Right ventricle myocardium superior (tissue), 1 donor: ENCODE measurements at regions of chr2 and their contacts with region 1.

Region 1: DNA sequence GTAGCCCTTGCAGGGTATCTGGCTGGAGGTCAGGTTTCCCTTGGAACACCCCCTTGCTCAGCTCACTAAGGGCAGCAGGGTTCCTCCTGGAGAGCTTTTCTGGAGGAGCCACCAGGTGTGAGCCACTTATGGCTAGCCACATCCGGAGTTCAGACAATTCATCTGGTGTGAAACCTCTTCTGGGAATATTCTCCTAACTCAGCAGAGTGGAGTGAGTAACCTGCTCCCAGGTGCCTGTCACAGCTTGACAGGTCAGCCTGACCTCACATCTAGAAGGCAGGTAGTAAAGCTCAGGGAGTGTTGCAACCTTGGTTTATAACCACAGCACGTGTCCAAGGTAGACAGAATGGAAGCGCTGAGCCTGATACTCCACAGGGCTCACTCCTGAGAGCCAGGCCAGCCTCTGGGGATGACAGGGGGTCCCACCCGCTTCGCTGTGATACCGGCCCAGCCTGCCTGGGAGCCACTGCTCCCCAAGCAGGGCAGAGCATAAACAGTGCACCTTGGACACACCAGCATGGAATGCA is 62.6 kb upstream of the TGFA start:
- DNase-seq: no peak
- ATAC-seq: no peak

Region 2: DNA sequence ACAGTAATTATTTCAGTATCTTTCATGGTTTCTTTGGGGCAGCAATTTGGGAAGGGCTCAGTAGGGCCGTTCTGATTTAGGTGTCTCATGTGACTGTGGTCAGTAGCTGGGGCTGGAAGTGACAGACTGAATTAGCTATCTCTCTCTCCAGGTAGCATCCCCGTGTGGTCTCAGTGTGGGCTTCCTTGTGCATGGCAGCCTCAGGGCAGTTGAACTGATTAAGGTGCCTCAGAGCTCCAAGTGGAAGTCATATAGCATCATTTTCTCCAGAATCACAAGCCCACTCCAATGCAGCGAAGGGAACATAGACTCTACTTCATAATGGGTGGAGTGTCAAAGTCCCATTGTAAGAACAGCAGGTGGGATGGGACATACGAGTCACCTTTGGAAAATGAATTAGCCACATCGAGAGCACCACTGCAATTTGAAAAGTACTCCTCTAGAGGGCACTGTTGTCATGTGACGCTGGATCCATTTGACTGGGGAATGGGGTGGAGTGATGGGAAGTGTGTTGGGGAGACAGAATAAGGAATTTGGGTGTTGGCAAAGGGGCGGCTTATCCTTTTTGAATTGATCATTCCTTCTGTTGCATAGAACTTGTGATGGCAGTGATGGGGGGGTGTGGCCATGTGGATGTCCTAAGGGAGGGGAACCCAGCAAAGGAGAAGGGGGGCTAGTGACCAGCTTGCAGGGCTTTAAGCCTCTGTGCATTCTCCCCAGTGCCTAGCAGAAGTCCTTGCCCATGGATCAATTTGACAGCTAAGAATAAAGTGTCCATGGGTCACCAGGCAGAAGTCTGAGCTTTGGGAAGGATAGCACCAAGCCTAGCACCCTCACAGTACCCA is 275.1 kb before region 1 on chr2:
- intact Hi-C with region 1: loop called (anchors 2 kb)
- DNase-seq: no peak
- ATAC-seq: peak; percentile 60

Region 3: DNA sequence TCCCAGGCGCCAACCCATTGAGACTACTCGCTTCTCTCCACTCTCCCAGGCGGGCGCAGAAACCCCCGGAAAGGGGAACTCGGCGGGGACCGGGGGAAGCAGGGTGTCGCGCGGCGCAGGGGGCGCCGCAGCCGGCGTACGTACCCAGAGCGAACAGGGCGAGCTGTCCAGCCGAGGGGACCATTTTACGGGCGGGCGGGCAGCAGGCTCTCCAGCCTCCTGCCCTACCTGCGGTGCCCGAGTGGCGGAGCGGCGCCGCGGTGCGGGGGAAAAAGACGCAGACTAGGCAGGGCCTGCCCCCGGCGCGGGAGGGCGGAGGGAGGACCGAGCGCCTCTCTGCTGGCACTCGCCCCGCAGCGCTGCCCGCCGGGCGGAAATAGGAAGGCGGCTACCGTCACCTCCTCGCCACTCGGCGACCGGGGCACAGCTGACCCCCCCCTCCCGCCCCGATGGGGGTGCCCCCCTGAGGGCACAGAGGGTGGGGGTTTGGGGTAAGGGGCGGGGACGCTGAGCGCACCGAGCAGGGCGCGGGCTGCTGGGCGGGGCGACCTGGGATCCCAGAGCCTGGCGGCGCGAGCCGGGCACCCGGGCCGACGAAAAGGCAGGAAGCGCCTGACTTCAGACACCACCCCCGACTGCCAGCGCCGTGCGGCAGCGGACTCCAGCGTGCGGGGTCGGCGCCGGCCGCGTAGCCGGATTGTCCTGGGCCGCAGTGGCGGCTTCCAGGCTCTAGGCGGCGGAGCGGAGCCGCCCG is 62.5 kb before region 1 on chr2 and contains the start of gene TGFA:
- intact Hi-C with region 1: loop called (anchors 5 kb)
- DNase-seq: peak; percentile 83
- ATAC-seq: peak; percentile 95
- total RNA-seq, gene TGFA: 2.1 TPM

Region 4: GRCh38 chr2:71798266-71799012 is 1182.2 kb after region 1 on chr2:
- intact Hi-C with region 1: no loop called
- DNase-seq: peak; percentile 59
- ATAC-seq: peak; percentile 66